HepG2 (cell line): ENCODE measurements at regions of chr16 and their contacts with region 1.

Region 1: GRCh38 chr16:9159839-9160550 is 68.6 kb downstream of the HAPSTR1 start:
- DNase-seq: peak; percentile 67
- ATAC-seq: peak; percentile 94
- H3K4me3 ChIP-seq: no peak overlapping the region
- H3K27ac ChIP-seq: no peak overlapping the region
- H3K4me1 ChIP-seq: peaks cover 14% of the 10 kb centered on the region
- H3K27me3 ChIP-seq: peaks cover 2 to 23% of the 10 kb centered on the region in 2 experiments; a peak in 4 of 5 replicates
- CTCF ChIP-seq: peak; percentile 96
- EP300 ChIP-seq: no peak
- POLR2A ChIP-seq: no peak
- RAD21 ChIP-seq: peak; percentile 88

Region 2: DNA sequence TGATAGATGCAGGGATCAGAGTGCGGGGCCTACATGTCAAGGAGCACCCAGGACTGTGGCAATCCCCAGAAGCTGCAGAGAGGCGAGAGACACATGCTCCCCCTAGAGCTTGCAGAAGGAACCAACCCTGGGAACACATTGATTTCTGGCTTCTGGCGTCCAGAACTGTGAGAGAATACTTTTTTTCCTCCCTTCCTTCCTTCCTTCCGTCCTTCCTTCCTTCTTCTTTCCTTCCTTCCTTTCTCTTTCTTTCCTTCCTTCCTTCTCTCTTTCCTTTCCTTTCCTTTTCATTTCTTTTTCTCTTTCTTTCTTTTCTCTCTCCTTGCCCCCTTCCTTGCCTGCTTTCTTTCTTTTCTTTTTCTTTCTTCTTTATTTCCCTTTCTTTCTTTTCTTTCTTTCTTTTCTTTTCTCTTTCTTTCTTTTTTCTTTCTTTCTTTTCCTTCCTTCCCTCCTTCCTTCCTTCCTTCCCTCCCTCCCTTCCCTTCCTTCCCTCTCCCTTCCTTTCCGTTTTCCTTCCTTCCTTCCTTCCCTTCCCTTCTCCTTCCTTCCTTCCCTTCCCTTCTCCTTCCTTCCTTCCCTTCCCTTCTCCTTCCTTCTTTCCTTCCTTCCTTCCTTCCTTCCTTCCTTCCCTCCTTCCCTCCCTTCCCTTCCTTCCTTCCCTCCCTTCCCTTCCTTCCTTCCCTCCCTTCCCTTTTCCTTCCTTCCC is 65.8 kb after region 1 on chr16:
- CTCF ChIA-PET with region 1: interaction called, 4 read pairs
- POLR2A ChIA-PET with region 1: no interaction called
- in situ Hi-C with region 1: loop called (anchors 5 kb)
- intact Hi-C with region 1: loop called (anchors 1 kb)
- DNase-seq: peak; percentile 59
- ATAC-seq: peak; percentile 94
- H3K4me3 ChIP-seq: no peak overlapping the region
- H3K27ac ChIP-seq: no peak overlapping the region
- H3K4me1 ChIP-seq: no peaks in the 10 kb centered on the region
- H3K27me3 ChIP-seq: peaks cover 0 to 18% of the 10 kb centered on the region in 2 experiments; a peak in 3 of 5 replicates
- CTCF ChIP-seq: peak; percentile 75
- EP300 ChIP-seq: no peak
- POLR2A ChIP-seq: no peak
- RAD21 ChIP-seq: peak; percentile 39; the same call in 1 of the 2 replicates

Region 3: GRCh38 chr16:9308356-9308801 is 148.4 kb after region 1 on chr16:
- CTCF ChIA-PET with region 1: no interaction called
- POLR2A ChIA-PET with region 1: no interaction called
- in situ Hi-C with region 1: no loop called
- intact Hi-C with region 1: loop called (anchors 10 kb)
- DNase-seq: no peak
- ATAC-seq: no peak
- H3K4me3 ChIP-seq: no peak overlapping the region
- H3K27ac ChIP-seq: no peak overlapping the region
- H3K4me1 ChIP-seq: no peaks in the 10 kb centered on the region
- H3K27me3 ChIP-seq: no peaks in the 10 kb centered on the region; a peak in 1 of 5 replicates
- CTCF ChIP-seq: no peak
- EP300 ChIP-seq: no peak
- POLR2A ChIP-seq: no peak
- RAD21 ChIP-seq: no peak

Region 4: GRCh38 chr16:10172848-10173655 is 1013.1 kb after region 1 on chr16:
- CTCF ChIA-PET with region 1: no interaction called
- POLR2A ChIA-PET with region 1: no interaction called
- in situ Hi-C with region 1: no loop called
- intact Hi-C with region 1: loop called (anchors 5 kb)
- DNase-seq: no peak
- ATAC-seq: no peak
- H3K4me3 ChIP-seq: no peak overlapping the region
- H3K27ac ChIP-seq: no peak overlapping the region
- H3K4me1 ChIP-seq: peaks cover 11% of the 10 kb centered on the region
- H3K27me3 ChIP-seq: peaks cover 2 to 4% of the 10 kb centered on the region in 2 experiments; a peak in 3 of 5 replicates
- CTCF ChIP-seq: no peak
- EP300 ChIP-seq: no peak
- POLR2A ChIP-seq: no peak
- RAD21 ChIP-seq: no peak